Mammary epithelial cell (primary cell): ENCODE measurements at regions of chr22 and their contacts with region 1.

Region 1: GRCh38 chr22:33519071-33519973 is 401.0 kb downstream of the LARGE1 start:
- DNase-seq: peak; percentile 18
- H3K4me3 ChIP-seq: no peak overlapping the region
- H3K27ac ChIP-seq: no peak overlapping the region
- H3K4me1 ChIP-seq: no peaks in the 10 kb centered on the region
- H3K27me3 ChIP-seq: no peaks in the 10 kb centered on the region
- CTCF ChIP-seq: peak; percentile 21 to 36

Region 2: DNA sequence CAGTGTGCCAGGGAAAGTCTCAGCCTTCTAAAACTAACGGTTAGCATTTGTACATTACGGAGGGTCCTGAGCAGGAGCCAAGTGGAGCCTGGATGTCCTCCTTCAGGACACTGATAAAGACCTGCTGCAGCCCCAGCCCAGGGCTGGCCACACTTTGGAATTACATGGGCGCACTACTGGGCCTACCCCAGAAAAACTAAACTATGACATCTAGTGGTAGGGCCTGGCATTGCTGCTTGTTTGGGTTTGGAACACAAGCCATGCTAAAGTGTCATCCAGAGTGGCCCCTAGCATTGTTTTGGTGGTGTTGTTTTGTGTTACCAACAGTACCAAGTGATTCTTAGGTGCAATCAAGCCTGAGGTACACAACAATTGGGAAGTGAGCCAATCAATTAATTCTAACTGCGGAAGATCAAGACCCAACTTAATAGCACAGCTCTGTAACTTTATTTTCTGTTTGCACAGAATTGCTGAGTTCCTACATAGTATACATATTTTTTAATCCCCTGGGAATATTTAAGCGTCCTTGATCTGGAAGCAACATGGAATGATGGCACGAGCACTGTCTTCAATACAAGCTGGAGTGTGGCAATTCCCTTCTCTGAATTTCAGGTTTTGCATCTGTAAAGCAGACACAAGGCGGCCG is 60.2 kb after region 1 on chr22:
- CTCF ChIA-PET with region 1: interaction called, 8 read pairs
- dilution Hi-C with region 1: no loop called
- in situ Hi-C with region 1: no loop called
- intact Hi-C with region 1: loop called (anchors 1 kb)
- DNase-seq: peak; percentile 28
- H3K4me3 ChIP-seq: no peak overlapping the region
- H3K27ac ChIP-seq: no peak overlapping the region
- H3K4me1 ChIP-seq: no peaks in the 10 kb centered on the region
- H3K27me3 ChIP-seq: no peaks in the 10 kb centered on the region
- CTCF ChIP-seq: peak; percentile 91 to 95

Region 3: GRCh38 chr22:34105461-34106062 is 586.2 kb after region 1 on chr22:
- CTCF ChIA-PET with region 1: no interaction called
- dilution Hi-C with region 1: no loop called
- in situ Hi-C with region 1: no loop called
- intact Hi-C with region 1: loop called (anchors 5 kb)
- DNase-seq: peak; percentile 20
- H3K4me3 ChIP-seq: no peak overlapping the region
- H3K27ac ChIP-seq: no peak overlapping the region
- H3K4me1 ChIP-seq: no peaks in the 10 kb centered on the region
- H3K27me3 ChIP-seq: no peaks in the 10 kb centered on the region
- CTCF ChIP-seq: peak; percentile 9 to 18